MCF 10A (cell line): ENCODE measurements at regions of chr5 and their contacts with region 1.

Region 1: DNA sequence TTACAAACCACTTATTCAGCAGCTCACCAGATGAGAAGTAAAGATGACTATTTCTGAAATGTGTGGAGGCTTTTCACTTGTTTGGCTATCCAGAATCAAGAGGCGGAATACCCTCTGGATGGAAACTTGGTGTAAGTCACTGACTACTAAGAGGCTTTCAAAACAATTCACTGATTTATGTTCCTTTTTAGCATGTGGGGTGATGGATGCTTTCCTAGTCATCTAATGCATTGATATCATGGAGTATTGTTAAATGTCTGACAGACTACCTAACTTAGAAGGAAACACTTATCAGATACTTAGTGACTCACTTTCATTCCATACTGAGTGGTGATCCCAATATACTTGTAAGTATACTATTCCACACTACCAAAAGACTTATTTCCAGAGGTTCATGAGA is 141.4 kb downstream of the PLK2 start:
- DNase-seq: no peak
- H3K4me3 Mint-ChIP-seq: no peak overlapping the region
- H3K27ac Mint-ChIP-seq: no peak overlapping the region
- H3K4me1 Mint-ChIP-seq: peaks cover 12% of the 10 kb centered on the region
- H3K27me3 Mint-ChIP-seq: no peaks in the 10 kb centered on the region
- CTCF ChIP-seq: no peak

Region 2: DNA sequence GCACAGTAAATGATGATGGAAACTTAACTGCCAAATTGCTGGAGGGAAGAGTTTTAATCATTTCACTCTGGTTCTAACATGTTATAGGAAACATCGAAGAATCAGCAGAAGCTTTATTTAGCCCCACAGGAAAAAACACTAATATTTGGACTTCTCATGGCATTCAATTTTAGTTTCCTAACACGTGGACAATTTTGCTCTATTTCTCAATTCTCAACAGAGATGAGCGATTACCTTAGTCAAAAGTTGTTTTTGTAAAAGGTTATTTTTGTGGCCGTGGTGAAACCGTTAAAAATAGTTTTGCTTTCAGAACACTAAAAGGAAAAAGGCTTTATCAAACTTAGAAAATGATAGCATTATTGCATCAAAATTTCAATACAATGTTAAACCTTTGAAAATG is 93.8 kb before region 1 on chr5:
- CTCF ChIA-PET with region 1: no interaction called
- POLR2A ChIA-PET with region 1: no interaction called
- intact Hi-C with region 1: no loop called
- DNase-seq: no peak
- H3K4me3 Mint-ChIP-seq: no peak overlapping the region
- H3K27ac Mint-ChIP-seq: no peak overlapping the region
- H3K4me1 Mint-ChIP-seq: peaks cover 5% of the 10 kb centered on the region
- H3K27me3 Mint-ChIP-seq: no peaks in the 10 kb centered on the region
- CTCF ChIP-seq: no peak

Region 3: DNA sequence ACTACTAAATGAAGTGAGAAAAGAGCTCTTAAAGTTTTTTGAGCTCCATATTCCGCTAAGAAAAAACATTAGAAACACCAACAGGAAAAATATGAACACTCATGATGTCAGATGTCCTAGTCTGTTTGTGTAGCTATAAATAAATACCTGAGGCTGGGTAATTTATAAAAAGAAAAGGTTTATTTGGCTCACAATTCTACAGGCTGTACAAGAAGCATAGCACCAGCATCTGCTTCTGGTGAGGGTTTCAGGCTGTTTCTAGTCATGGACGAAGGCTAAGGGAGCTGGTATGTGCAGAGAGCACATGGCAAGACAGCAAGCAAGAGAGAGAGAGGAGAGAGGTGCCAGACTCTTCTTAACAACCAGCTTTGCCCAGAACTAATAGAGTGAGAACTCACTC is 44.8 kb before region 1 on chr5:
- CTCF ChIA-PET with region 1: no interaction called
- POLR2A ChIA-PET with region 1: interaction called, 13 read pairs
- intact Hi-C with region 1: no loop called
- DNase-seq: no peak
- H3K4me3 Mint-ChIP-seq: no peak overlapping the region
- H3K27ac Mint-ChIP-seq: no peak overlapping the region
- H3K4me1 Mint-ChIP-seq: peaks cover 17% of the 10 kb centered on the region
- H3K27me3 Mint-ChIP-seq: no peaks in the 10 kb centered on the region
- CTCF ChIP-seq: no peak

Region 4: GRCh38 chr5:58545912-58546311 is 227.4 kb after region 1 on chr5:
- CTCF ChIA-PET with region 1: no interaction called
- POLR2A ChIA-PET with region 1: no interaction called
- intact Hi-C with region 1: no loop called
- DNase-seq: peak; percentile 6
- H3K4me3 Mint-ChIP-seq: no peak overlapping the region
- H3K27ac Mint-ChIP-seq: no peak overlapping the region
- H3K4me1 Mint-ChIP-seq: no peaks in the 10 kb centered on the region
- H3K27me3 Mint-ChIP-seq: peaks cover 21% of the 10 kb centered on the region
- CTCF ChIP-seq: no peak